ENCODE measurements at regions of chr19 and their contacts with region 1.

Region 1: DNA sequence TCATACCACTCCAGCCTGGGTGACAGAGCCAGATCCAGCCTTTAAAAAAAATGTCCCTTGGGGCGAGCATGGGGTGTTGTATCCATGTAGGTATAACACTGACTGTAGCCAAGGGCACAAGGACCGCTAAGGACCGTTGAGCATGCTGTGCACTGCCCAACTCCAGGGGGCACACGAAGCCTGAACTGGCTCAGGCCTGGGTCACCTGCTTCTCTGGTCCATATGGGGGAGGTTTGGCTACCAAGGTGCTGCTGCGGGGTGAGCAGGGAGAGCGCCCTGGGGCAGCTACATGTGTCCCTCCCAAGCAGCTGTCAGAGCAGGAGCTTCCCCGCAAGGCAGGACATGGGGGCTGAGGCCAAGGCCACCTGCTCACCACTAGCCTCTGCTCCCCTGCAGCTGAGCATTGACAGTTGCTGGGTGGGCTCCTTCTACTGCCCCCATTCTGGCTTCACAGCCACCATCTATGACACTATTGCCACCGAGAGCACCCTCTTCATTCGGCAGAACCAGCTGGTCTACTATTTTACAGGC is 16.3 kb downstream of the CATSPERG start:
- DNase-seq: no peak
- ATAC-seq: no peak
- H3K4me3 Mint-ChIP-seq: no peak overlapping the region
- H3K27ac Mint-ChIP-seq: no peak overlapping the region
- H3K4me1 Mint-ChIP-seq: no peaks in the 10 kb centered on the region
- H3K27me3 Mint-ChIP-seq: no peaks in the 10 kb centered on the region

Region 2: DNA sequence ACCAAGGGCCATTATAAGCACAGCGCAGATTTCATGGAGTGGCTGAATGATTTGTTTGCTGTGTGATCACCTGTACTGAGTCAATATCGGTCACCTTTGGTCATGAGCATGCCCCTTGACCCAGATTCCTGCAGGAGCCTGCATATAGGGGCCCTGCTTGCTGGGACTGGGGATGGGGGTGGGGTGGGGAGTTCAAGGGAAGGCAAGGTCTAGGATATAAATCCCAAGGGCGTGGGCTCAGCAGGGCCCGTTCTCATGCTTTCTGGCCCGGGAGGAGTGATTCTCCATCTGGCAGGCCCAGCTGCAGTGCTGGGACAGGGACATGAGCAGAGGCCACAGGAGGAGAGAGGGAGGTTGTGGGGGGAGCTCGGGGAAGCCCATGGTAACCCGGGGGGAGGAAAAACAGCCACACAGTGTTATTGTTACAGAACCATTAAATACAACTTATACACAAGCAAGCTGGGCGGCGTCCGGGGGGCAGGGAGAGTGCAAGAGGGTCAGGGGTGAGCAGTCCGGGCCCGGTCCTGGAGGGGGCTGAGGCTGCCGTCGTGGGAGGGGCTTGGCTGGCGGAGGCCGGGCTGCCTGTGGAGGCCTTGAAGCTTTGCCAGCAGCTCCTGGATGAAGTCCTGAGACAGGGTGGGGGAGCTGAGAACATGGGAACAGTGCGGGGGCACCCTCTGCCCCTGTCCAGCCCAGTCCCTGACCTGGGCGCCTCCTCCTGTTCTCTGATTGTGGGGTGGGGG is 100.9 kb before region 1 on chr19:
- CTCF ChIA-PET with region 1: no interaction called
- POLR2A ChIA-PET with region 1: interaction called, 10 read pairs
- intact Hi-C with region 1: no loop called
- DNase-seq: no peak
- ATAC-seq: no peak
- H3K4me3 Mint-ChIP-seq: no peak overlapping the region
- H3K27ac Mint-ChIP-seq: no peak overlapping the region
- H3K4me1 Mint-ChIP-seq: no peaks in the 10 kb centered on the region
- H3K27me3 Mint-ChIP-seq: peaks cover 11% of the 10 kb centered on the region

Measured in activated CD4-positive, alpha-beta T cell treated with anti-CD3 and anti-CD28 coated beads for 36 hours (primary cell).